A549 (cell line): ENCODE measurements at regions of chr17 and their contacts with region 1.

Region 1: DNA sequence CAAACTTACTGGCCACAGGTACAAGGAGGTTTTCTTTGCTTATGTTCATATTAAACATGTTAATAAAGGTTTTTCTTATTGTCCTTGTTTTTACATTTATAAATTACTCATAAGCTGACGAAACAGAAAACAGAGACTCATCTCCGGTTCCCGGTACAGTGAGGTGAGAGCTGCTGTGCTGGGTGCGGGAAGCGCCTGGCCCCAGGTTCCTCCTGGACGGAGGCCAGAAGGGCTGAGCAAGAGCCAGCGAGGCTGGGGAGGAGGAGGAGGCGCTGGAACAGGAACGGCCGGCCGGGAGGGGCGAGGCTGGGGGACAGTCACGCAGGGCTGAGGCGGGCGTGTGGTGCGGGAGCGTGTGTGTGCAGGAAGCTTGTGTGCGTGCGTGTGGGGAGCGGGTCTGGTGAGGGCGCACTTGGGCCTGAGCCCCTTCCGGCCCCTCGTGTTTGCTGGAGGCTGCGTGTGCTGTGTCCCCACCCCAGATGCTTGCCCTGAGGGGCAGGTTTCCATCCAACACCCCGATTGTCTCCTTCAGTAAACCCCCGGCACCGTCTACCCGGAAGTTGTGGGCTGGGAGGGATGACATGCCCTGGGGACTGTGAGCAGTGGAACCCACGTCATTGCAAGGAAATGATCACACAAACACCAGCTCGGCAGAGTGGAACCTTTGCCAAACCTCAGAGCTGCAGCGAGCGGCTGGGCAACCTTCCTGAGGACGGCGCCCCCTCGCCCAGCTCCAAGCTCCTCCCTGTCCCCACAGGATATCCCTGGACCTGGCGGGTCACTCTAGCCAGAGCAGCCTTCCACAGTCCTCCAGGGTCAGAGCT is 19.5 kb downstream of the CD7 start:
- DNase-seq: peak; percentile 92 to 98
- ATAC-seq: peak; percentile 72 to 74
- H3K4me3 ChIP-seq: peak overlapping the region; percentile 42
- H3K27ac ChIP-seq: peak overlapping the region; percentile 96 to 98
- H3K4me1 ChIP-seq: peaks cover 69% of the 10 kb centered on the region
- CTCF ChIP-seq: peak; percentile 15; the same call in 1 of the 3 replicates
- EP300 ChIP-seq: peak in 1 of 2 experiments; percentile 56; a peak in 2 of 5 replicates
- POLR2A ChIP-seq: peak; percentile 63
- RAD21 ChIP-seq: no peak; a peak in 1 of 5 replicates

Region 2: GRCh38 chr17:82244413-82245140 is 53.3 kb before region 1 on chr17:
- CTCF ChIA-PET with region 1: interaction called, 227 read pairs
- POLR2A ChIA-PET with region 1: interaction called, 24 read pairs
- DNase-seq: peak in 1 of 2 experiments; percentile 69
- ATAC-seq: peak in 1 of 2 experiments; percentile 17; a peak in 3 of 6 replicates
- H3K4me3 ChIP-seq: no peak overlapping the region
- H3K27ac ChIP-seq: 0 out of 6 replicates have a peak overlapping the region, but pooled peaks of 1 of the 2 experiments have one; percentile 1
- H3K4me1 ChIP-seq: peaks cover 88% of the 10 kb centered on the region
- CTCF ChIP-seq: peak; percentile 81
- EP300 ChIP-seq: no peak
- POLR2A ChIP-seq: no peak
- RAD21 ChIP-seq: peak; percentile 87 to 89

Region 3: DNA sequence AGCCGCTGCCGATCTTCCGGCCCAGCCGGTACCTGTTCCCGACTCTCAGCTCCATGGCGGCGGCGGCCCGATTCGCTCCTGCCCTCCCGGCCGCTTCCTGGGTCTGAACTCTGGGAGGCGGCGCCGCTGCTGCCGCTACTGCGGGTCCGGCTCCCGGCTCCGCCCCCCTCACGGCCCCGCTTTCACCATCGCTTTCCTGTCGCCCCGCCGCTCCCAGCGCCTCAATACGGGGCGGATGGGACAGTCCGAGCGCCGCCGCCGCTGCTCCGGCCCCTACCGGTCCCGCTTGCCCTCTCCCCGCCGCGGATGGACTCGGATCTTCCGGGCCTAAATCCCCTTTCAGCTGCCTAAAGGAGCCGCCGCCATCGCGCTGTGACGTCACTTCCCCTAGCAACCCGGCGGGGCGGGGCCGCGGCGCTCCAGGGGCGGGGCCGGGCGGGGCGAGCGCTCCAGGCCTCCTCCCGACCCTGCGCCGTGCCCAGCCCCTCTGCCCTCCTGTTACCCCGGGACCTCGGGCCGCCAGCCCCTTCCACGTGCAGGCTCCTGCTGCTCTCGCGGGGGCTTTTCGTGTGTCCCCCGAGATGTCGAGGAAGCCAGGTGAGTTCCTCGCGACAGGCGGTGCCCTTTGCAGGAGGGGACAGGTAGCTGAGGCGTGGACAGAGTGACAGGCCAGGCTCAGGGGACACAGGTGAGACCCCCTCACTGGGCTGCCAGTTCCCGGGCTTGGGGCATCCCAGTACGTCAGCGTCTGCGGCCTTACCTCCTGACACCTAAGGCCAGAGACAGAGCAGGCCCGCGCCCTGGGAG is 24.4 kb before region 1 on chr17 and contains the start of gene CSNK1D:
- CTCF ChIA-PET with region 1: interaction called, 19 read pairs
- POLR2A ChIA-PET with region 1: interaction called, 36 read pairs
- DNase-seq: peak; percentile 90 to 94
- ATAC-seq: peak; percentile 82 to 87
- H3K4me3 ChIP-seq: peak within 1 kb of the TSS; percentile 97
- H3K27ac ChIP-seq: peak within 1 kb of the TSS; percentile 99 to 100
- H3K4me1 ChIP-seq: peaks cover 47% of the 10 kb centered on the region
- CTCF ChIP-seq: no peak
- EP300 ChIP-seq: no peak
- POLR2A ChIP-seq: peak; percentile 63
- RAD21 ChIP-seq: no peak
- polyA plus RNA-seq, gene CSNK1D: 130 and 139 TPM in 2 replicates

Region 4: DNA sequence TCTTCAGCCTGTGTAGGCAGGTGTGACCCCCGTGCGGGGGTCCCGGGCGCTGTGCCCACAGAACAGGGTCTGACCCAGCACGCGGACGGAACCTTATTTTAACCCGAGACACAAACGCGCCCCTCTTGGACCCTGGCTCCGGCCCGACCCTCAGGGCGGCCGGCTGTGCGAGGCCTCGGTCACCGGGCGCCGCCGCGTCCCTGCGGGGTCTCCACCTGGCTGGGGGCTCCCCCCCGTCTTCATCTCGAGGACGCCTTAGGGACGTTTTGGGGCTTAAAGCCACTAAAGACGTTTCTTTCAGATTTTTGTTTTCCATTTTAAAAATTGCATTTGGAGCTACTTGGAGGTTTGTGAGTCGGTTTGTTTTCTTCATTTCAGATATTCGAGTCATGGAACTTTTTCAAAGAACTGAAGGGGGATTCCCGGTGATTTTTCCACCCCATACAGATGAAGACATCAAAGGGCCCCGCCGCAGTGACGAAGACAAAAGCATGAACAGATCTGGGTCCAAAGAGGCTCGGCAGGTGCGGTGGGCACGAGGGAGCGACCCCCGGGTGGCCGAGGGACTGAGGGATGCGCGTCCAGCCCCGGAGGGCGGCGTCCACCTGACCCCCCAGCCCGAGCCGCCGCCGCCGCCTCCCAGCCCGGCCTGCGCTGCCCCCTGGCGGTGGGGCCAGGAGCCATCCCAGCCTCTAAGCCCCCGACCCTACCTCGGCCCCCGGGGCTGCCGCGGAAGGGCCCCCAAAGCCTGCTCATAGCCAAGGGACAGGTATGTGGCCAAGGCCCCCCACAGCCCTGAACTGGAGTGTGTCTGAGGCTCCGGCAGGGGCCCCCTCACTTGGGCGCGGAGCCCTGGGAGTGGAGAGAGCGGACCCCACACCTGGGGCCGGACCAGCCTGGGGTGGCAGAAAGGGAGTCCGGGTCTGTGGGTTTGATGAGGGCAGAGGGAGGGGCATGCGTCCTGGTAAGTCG is 23.3 kb after region 1 on chr17:
- CTCF ChIA-PET with region 1: interaction called, 343 read pairs
- POLR2A ChIA-PET with region 1: interaction called, 3 read pairs
- DNase-seq: peak in 1 of 2 experiments; percentile 66
- ATAC-seq: peak; percentile 23 to 82; a peak in 3 of 6 replicates
- H3K4me3 ChIP-seq: peak overlapping the region; percentile 32
- H3K27ac ChIP-seq: peak overlapping the region; percentile 60 to 62; a peak in 5 of 6 replicates
- H3K4me1 ChIP-seq: peaks cover 12% of the 10 kb centered on the region; the same call in 2 of the 3 replicates
- CTCF ChIP-seq: peak; percentile 96
- EP300 ChIP-seq: no peak
- POLR2A ChIP-seq: no peak
- RAD21 ChIP-seq: peak; percentile 80 to 97

Region 5: GRCh38 chr17:82351716-82352488 is 54.0 kb after region 1 on chr17:
- CTCF ChIA-PET with region 1: interaction called, 18 read pairs
- POLR2A ChIA-PET with region 1: no interaction called
- DNase-seq: peak; percentile 88 to 93
- ATAC-seq: peak; percentile 75 to 92
- H3K4me3 ChIP-seq: no peak overlapping the region
- H3K27ac ChIP-seq: no peak overlapping the region
- H3K4me1 ChIP-seq: peaks cover 19% of the 10 kb centered on the region; the same call in 2 of the 3 replicates
- CTCF ChIP-seq: peak; percentile 98
- EP300 ChIP-seq: no peak
- POLR2A ChIP-seq: no peak
- RAD21 ChIP-seq: peak; percentile 97

Region 6: DNA sequence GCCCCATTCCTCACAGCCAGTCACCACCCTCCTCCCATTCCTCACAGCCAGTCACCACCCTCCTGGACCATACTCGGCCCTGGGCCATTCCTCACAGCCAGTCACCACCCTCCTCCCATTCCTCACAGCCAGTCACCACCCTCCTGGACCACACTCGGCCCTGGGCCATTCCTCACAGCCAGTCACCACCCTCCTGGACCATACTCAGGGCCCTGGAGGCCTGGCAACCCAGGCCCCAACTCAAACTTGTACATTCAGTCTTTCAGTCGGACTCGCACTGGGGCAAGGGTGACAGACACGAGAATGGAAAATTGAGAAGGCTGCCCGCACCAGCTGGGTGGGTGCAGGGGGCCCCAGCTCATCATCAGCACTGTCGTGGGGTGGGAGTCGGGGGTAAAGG is 191.2 kb after region 1 on chr17:
- CTCF ChIA-PET with region 1: no interaction called
- POLR2A ChIA-PET with region 1: no interaction called
- DNase-seq: no peak
- ATAC-seq: no peak
- H3K4me3 ChIP-seq: no peak overlapping the region
- H3K27ac ChIP-seq: no peak overlapping the region
- H3K4me1 ChIP-seq: peaks cover 22% of the 10 kb centered on the region
- CTCF ChIP-seq: no peak
- EP300 ChIP-seq: no peak
- POLR2A ChIP-seq: no peak
- RAD21 ChIP-seq: no peak